CD8-positive, alpha-beta T cell (primary cell): ENCODE measurements at regions of chr16 and their contacts with region 1.

Region 1: DNA sequence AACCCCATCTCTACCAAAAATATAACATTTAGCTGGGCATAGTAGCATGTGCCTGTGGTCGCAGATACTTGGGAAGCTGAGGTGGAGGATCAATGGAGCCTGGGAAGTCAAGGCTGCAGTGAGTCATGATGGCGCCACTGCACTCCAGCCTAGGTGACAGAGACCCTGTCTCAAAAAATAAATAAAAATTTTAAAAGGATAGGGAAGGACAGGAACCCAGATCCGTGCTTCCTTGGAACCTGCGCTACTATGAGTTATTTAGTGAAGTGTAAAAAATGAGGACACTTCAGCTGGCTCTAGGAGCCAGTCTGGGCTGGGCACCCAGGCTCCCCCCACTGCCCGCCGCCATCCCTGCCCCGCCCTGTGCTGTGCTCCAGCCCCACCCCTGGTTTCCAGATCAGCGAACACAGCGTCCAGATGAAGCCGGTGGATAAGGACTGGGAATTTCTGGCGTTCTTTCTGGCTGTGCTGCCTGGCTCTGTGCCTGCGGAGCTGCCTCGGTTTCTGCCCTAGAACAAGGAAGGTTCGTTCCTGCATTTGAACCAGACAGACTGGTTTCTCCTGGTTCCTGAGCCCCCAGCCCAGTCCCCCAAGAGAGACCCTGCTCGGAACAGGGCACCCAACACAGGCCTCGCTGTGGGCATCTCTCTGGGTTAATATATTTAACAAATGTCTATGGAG is 18.5 kb downstream of the PLLP start:
- DNase-seq: no peak
- ATAC-seq: no peak
- H3K4me3 ChIP-seq: peak overlapping the region in 1 of 2 experiments; percentile 10
- H3K4me3 Mint-ChIP-seq: peak overlapping the region; percentile 27
- H3K27ac ChIP-seq: peak overlapping the region; percentile 36 to 68
- H3K27ac Mint-ChIP-seq: peak overlapping the region; percentile 91
- H3K4me1 ChIP-seq: peaks cover 53% of the 10 kb centered on the region
- H3K4me1 Mint-ChIP-seq: peaks cover 42% of the 10 kb centered on the region
- H3K27me3 ChIP-seq: no peaks in the 10 kb centered on the region
- H3K27me3 Mint-ChIP-seq: no peaks in the 10 kb centered on the region
- CTCF ChIP-seq: no peak

Region 2: GRCh38 chr16:57071831-57072582 is 194.0 kb before region 1 on chr16:
- CTCF ChIA-PET with region 1: no interaction called
- POLR2A ChIA-PET with region 1: no interaction called
- intact Hi-C with region 1: no loop called
- DNase-seq: peak in 2 of 9 experiments; percentile 39 to 66
- ATAC-seq: peak; percentile 14
- H3K4me3 ChIP-seq: no peak overlapping the region
- H3K4me3 Mint-ChIP-seq: no peak overlapping the region
- H3K27ac ChIP-seq: peak overlapping the region; percentile 15 to 59
- H3K27ac Mint-ChIP-seq: peak overlapping the region; percentile 64
- H3K4me1 ChIP-seq: peaks cover 9% of the 10 kb centered on the region
- H3K4me1 Mint-ChIP-seq: peaks cover 18% of the 10 kb centered on the region
- H3K27me3 ChIP-seq: no peaks in the 10 kb centered on the region
- H3K27me3 Mint-ChIP-seq: no peaks in the 10 kb centered on the region
- CTCF ChIP-seq: no peak

Region 3: DNA sequence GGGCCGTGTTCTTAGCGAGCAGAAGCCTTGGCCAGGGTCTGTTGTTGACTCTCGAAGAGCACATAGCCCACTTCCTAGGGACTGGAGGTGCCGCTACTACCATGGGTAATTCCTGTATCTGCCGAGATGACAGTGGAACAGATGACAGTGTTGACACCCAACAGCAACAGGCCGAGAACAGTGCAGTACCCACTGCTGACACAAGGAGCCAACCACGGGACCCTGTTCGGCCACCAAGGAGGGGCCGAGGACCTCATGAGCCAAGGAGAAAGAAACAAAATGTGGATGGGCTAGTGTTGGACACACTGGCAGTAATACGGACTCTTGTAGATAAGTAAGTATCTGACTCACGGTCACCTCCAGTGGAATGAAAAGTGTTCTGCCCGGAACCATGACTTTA is 61.3 kb before region 1 on chr16:
- CTCF ChIA-PET with region 1: no interaction called
- POLR2A ChIA-PET with region 1: no interaction called
- intact Hi-C with region 1: no loop called
- DNase-seq: no peak
- ATAC-seq: no peak
- H3K4me3 ChIP-seq: no peak overlapping the region
- H3K4me3 Mint-ChIP-seq: no peak overlapping the region
- H3K27ac ChIP-seq: no peak overlapping the region
- H3K27ac Mint-ChIP-seq: no peak overlapping the region
- H3K4me1 ChIP-seq: no peaks in the 10 kb centered on the region
- H3K4me1 Mint-ChIP-seq: peaks cover 12% of the 10 kb centered on the region
- H3K27me3 ChIP-seq: no peaks in the 10 kb centered on the region
- H3K27me3 Mint-ChIP-seq: no peaks in the 10 kb centered on the region
- CTCF ChIP-seq: no peak

Region 4: DNA sequence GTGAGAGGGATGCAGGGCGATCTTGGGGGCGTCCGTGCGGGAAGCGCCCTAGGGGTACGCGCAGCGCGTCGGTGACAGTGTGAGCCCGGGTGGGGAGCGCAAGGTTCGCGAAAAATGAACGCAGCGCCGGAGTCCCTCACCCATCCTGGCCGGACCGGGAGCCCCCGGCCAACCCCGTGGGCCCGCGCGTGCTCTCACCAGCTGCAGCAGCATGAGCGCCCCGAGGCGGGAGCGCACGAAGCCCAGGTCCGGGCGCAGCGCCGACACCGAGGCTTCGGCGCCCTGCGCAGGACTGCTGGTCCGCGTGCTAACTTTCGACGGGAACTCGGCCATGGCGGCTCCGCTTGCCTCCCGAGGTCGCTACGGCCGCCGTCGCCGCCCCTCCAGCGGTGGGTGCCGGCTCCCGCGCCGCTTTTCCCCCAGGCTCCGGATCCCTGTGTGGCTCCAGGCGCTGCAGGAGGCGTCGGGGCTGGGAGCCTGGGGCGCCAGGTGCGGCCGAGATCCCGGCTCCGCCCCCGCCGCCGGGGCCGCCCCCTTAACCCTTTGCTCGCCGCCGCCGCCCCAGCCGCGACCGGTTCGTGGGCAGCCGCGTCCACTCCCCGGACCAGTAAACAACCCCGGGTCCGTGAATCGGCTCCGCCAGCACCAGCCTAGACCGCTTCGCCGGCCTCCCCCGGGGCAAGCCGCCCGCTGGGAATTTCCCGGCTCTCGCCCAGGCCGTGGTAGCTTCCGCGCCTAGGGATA is 18.4 kb after region 1 on chr16 and contains the start of gene PLLP:
- CTCF ChIA-PET with region 1: interaction called, 3 read pairs
- POLR2A ChIA-PET with region 1: no interaction called
- intact Hi-C with region 1: loop called in 1 of 2 experiments (anchors 2 kb)
- DNase-seq: peak in 6 of 9 experiments; percentile 27 to 68 (median 49)
- ATAC-seq: peak; percentile 70
- H3K4me3 ChIP-seq: peak within 1 kb of the TSS; percentile 49 to 50
- H3K4me3 Mint-ChIP-seq: peak within 1 kb of the TSS; percentile 77
- H3K27ac ChIP-seq: no peak within 1 kb of the TSS
- H3K27ac Mint-ChIP-seq: no peak within 1 kb of the TSS
- H3K4me1 ChIP-seq: peaks cover 16% of the 10 kb centered on the region
- H3K4me1 Mint-ChIP-seq: peaks cover 25% of the 10 kb centered on the region
- H3K27me3 ChIP-seq: peaks cover 0 to 13% of the 10 kb centered on the region in 2 experiments
- H3K27me3 Mint-ChIP-seq: peaks cover 3% of the 10 kb centered on the region
- CTCF ChIP-seq: no peak
- total RNA-seq, gene PLLP: 0.47 to 1.1 TPM